GM12878 (cell line): ENCODE measurements at regions of chr19 and their contacts with region 1.

Region 1: DNA sequence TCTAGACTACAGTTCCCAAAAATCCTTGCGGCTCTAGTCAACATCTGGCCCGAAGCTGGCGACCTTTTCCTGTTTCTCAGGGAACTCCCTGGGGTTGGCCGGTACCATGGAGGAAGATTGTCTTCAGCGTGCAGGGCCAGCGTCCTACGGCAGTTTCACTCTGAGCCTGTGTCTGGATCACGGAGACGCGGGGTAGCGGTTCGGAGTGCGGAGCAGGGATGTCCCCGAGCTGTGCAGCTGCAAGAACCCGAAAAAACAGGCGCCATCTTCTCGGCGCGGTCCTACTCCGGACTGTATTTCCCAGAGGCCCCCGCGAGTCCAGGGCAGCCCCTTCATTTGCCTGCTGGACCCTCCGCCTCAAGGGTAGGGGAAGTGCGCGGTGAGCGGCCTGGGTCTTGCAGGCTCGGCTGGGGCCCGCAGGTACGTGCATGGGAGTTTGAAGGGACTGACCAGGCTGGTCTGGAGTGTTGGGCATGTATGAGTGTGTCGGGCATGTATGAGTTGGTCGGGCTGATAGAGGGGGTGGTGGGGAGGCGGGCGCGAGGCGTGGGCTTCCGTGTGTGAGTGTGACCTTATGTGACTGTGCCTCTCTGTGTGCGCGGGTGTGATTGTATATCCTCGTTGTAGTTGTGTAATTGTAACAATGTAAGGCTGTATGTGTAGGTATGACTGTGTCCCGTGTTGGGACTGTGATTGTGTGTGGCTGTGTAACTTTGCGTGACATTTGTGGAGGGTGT is at the start of gene ZNF383:
- DNase-seq: peak; percentile 81
- ATAC-seq: peak; percentile 96
- H3K4me3 ChIP-seq: peak within 1 kb of the TSS; percentile 86
- H3K27ac ChIP-seq: peak within 1 kb of the TSS; percentile 93
- H3K4me1 ChIP-seq: no peaks in the 10 kb centered on the region; the same call in 1 of the 2 replicates
- H3K27me3 ChIP-seq: no peaks in the 10 kb centered on the region
- CTCF ChIP-seq: no peak
- EP300 ChIP-seq: peak in 1 of 2 experiments; percentile 37; a peak in 1 of 4 replicates
- POLR2A ChIP-seq: peak; percentile 91
- RAD21 ChIP-seq: no peak
- polyA plus RNA-seq, gene ZNF383: 3.3 to 4.9 TPM

Region 2: DNA sequence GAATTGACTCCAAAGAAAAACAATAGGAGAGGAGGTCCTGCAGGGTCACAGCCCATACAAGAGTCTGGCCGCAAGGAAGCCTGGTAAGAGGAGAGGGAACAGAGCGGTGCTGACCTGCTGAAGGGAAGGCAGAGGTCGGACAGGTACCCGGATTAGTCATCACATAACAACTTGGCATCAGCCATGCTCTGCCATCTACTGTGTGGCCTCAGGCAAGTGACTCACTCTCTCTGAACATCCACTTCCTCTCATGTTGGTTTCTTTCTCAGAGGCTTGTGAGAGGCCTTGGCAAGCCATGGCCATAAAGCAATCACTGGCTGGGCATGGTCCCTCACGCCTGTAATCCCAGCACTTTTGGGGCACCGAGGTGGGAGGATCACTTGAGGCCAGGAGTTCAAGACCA is 1085.5 kb before region 1 on chr19:
- CTCF ChIA-PET with region 1: interaction called, 3 read pairs
- POLR2A ChIA-PET with region 1: interaction called, 4 read pairs
- RAD21 ChIA-PET with region 1: no interaction called
- SMC1A ChIA-PET with region 1: no interaction called
- in situ Hi-C with region 1: no loop called
- intact Hi-C with region 1: loop called (anchors 10 kb)
- DNase-seq: peak; percentile 43
- ATAC-seq: peak; percentile 37
- H3K4me3 ChIP-seq: no peak overlapping the region
- H3K27ac ChIP-seq: no peak overlapping the region
- H3K4me1 ChIP-seq: peaks cover 5% of the 10 kb centered on the region
- H3K27me3 ChIP-seq: no peaks in the 10 kb centered on the region
- CTCF ChIP-seq: no peak
- EP300 ChIP-seq: no peak
- POLR2A ChIP-seq: no peak
- RAD21 ChIP-seq: no peak

Region 3: DNA sequence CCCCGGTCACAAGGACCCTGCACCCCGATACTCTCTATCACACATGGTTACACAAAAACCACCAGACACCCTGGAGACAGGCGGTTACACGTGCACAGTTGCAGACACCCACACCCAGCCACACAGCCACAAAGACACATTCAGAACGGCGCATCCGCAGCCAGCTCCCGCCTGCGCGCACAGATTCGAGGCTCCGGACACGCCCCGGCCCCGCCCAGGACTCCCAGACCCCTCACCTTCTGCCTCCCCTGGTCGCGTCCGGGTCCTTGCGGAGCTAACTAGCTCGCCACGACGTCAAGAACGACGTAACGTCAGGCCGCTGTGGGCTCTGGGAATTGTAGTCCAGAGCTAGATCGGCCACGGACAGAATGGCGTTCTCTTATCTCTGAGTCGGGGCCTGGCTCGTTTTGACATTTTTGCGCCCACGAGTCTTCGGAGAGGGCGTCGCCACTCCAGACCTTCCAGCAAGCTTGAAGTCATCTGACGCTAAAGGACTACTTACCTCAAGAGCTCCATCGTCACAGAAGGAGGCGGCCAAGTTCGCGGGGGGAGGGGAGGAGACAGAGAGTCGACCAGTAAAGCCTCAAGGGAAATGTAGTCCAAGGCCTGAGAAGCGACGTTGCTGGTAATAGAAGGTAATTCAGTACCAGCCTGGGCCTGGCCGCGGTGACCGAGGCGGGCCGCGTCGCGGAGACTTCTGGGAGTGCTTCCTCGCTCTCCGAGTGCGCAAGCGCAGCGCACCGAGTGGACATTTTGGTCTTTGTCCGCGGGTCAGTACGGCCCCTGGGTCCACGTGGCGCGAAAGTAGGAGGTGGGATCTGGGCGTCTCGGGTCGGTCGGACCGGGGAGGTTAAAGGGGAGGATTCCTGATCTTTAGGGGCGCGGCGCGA is 1003.4 kb before region 1 on chr19 and contains the starts of genes ZNF146 and ZNF565:
- CTCF ChIA-PET with region 1: no interaction called
- POLR2A ChIA-PET with region 1: interaction called, 5 read pairs
- RAD21 ChIA-PET with region 1: interaction called, 3 read pairs
- SMC1A ChIA-PET with region 1: no interaction called
- in situ Hi-C with region 1: no loop called
- intact Hi-C with region 1: loop called (anchors 10 kb)
- DNase-seq: peak; percentile 96
- ATAC-seq: peak; percentile 94
- H3K4me3 ChIP-seq: peak within 1 kb of the TSS; percentile 78
- H3K27ac ChIP-seq: peak within 1 kb of the TSS; percentile 90
- H3K4me1 ChIP-seq: no peaks in the 10 kb centered on the region; the same call in 1 of the 2 replicates
- H3K27me3 ChIP-seq: no peaks in the 10 kb centered on the region
- CTCF ChIP-seq: no peak
- EP300 ChIP-seq: peak in 1 of 2 experiments; percentile 9; a peak in 2 of 4 replicates
- POLR2A ChIP-seq: peak; percentile 95
- RAD21 ChIP-seq: no peak
- polyA plus RNA-seq, gene ZNF146: 20.0 to 37.8 TPM
- polyA plus RNA-seq, gene ZNF565: 0.72 to 1.8 TPM

Region 4: DNA sequence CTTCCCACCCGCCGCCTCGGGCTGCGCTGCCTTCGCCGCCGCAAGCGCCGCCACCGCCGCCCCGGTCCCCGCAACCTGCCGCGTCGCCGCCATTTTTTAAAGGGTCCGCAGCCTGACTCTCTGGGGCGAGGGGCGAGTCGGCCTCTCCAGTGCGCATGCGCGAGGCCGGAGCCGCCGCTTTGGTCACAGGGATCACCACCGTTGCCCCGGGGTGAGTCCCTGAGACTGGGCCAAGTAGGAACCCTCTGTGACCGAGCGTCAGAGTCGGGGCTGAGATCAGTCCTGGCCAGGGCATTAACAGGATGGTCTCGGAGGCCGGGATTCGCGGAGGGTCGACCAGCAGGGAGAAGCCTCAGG is 960.5 kb before region 1 on chr19:
- CTCF ChIA-PET with region 1: no interaction called
- POLR2A ChIA-PET with region 1: no interaction called
- RAD21 ChIA-PET with region 1: no interaction called
- SMC1A ChIA-PET with region 1: no interaction called
- in situ Hi-C with region 1: no loop called
- intact Hi-C with region 1: no loop called
- DNase-seq: no peak
- ATAC-seq: no peak
- H3K4me3 ChIP-seq: no peak overlapping the region
- H3K27ac ChIP-seq: no peak overlapping the region
- H3K4me1 ChIP-seq: no peaks in the 10 kb centered on the region
- H3K27me3 ChIP-seq: no peaks in the 10 kb centered on the region
- CTCF ChIP-seq: no peak
- EP300 ChIP-seq: no peak
- POLR2A ChIP-seq: no peak
- RAD21 ChIP-seq: no peak

Region 5: DNA sequence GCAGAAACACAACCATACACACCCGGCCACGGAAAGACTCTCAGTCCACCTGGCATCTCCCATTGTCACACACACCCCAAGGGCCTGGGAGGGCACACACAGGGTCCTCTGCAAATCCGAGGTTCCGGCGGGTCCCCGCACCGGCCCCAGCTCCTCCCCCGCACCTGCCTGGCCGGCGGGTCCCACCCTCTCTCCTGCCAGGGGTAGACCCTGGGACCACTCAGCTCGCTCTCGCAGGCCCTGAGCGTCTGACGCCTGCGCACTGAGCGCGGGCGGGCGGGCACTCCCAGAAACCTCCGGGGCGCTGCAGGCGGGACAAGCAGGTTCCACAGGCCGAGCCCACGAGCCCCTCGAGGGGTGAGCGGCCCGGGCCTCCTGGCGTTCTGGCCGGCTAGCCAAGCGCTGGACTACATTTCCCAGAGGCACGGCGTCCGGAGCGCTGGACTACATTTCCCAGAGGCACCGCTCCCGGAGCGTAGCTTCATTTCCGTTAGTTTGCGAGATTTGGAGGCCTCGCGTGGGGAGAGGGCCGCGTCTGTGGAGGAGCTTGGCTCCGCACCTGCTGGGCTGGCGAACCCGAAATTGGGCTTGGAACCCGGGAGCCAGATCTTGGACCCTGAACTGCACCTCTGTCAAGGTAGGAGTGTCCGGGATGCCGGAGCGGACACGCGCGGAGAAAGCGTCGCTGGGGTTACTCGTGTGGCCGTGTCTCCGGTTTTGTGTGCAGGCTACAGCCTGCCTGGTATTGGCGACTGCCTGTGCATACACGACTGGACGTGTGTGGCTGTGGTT is 139.9 kb before region 1 on chr19 and contains the start of gene ZNF420:
- CTCF ChIA-PET with region 1: no interaction called
- POLR2A ChIA-PET with region 1: no interaction called
- RAD21 ChIA-PET with region 1: no interaction called
- SMC1A ChIA-PET with region 1: no interaction called
- in situ Hi-C with region 1: no loop called
- intact Hi-C with region 1: loop called (anchors 5 kb)
- DNase-seq: peak; percentile 82
- ATAC-seq: peak; percentile 99
- H3K4me3 ChIP-seq: peak within 1 kb of the TSS; percentile 88
- H3K27ac ChIP-seq: peak within 1 kb of the TSS; percentile 83
- H3K4me1 ChIP-seq: peaks cover 6% of the 10 kb centered on the region
- H3K27me3 ChIP-seq: no peaks in the 10 kb centered on the region
- CTCF ChIP-seq: no peak
- EP300 ChIP-seq: no peak
- POLR2A ChIP-seq: peak; percentile 89
- RAD21 ChIP-seq: no peak
- polyA plus RNA-seq, gene ZNF420: 6.4 to 7.8 TPM

Region 6: GRCh38 chr19:37172368-37173366 is 45.4 kb before region 1 on chr19 and contains the start of gene ZNF585A:
- CTCF ChIA-PET with region 1: no interaction called
- POLR2A ChIA-PET with region 1: no interaction called
- RAD21 ChIA-PET with region 1: no interaction called
- SMC1A ChIA-PET with region 1: no interaction called
- in situ Hi-C with region 1: no loop called
- intact Hi-C with region 1: loop called (anchors 5 kb)
- DNase-seq: peak; percentile 92
- ATAC-seq: peak; percentile 100
- H3K4me3 ChIP-seq: peak within 1 kb of the TSS; percentile 89
- H3K27ac ChIP-seq: peak within 1 kb of the TSS; percentile 82
- H3K4me1 ChIP-seq: no peaks in the 10 kb centered on the region
- H3K27me3 ChIP-seq: no peaks in the 10 kb centered on the region
- CTCF ChIP-seq: peak in 2 of 3 experiments; percentile 14 to 16; a peak in 2 of 6 replicates
- EP300 ChIP-seq: no peak
- POLR2A ChIP-seq: peak; percentile 62
- RAD21 ChIP-seq: no peak
- polyA plus RNA-seq, gene ZNF585A: 36.4 to 38.7 TPM

Region 7: GRCh38 chr19:37334179-37335071 is 116.4 kb after region 1 on chr19:
- CTCF ChIA-PET with region 1: no interaction called
- POLR2A ChIA-PET with region 1: no interaction called
- RAD21 ChIA-PET with region 1: no interaction called
- SMC1A ChIA-PET with region 1: no interaction called
- in situ Hi-C with region 1: no loop called
- intact Hi-C with region 1: loop called (anchors 10 kb)
- DNase-seq: peak; percentile 71
- ATAC-seq: peak; percentile 100
- H3K4me3 ChIP-seq: peak overlapping the region; percentile 76
- H3K27ac ChIP-seq: peak overlapping the region; percentile 81
- H3K4me1 ChIP-seq: peaks cover 7% of the 10 kb centered on the region
- H3K27me3 ChIP-seq: no peaks in the 10 kb centered on the region
- CTCF ChIP-seq: 0 out of 6 replicates have a peak, but pooled peaks of 1 of the 3 experiments have one; percentile 3
- EP300 ChIP-seq: no peak; a peak in 1 of 4 replicates
- POLR2A ChIP-seq: peak; percentile 81
- RAD21 ChIP-seq: no peak

Region 8: DNA sequence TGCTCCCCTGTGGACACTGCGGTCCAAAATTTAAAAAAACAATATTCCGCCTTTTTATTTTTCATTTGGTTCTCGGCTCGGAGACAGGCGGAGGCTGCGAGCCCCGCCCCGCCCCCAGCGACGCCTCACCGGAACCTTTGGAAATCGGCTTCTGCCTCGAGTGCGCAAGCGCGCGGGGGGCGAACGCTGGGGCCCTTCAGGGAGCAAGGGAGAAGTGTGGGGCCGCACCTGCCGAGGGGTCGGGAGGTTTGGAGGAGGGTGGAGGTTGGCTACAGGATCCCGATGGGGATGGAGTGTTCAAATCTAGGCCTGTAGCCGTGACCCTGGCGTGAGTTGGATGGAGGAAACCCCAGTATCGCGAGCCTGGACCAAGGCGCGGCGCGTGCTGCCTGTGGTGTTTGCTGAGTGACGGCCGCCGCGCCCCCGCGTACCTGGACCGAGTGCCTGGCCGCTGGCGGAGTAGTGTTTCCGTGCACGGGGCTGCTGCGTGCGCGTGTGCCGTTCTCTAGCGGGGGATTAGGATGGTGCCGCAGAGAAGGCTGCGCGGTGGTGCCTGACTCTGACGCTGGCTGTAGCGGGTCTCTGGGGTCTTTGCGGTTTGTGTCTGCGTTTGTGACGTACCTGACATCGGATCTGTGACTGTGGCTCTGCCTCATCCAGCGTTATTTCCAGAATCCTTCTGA is 437.8 kb after region 1 on chr19:
- CTCF ChIA-PET with region 1: no interaction called
- POLR2A ChIA-PET with region 1: no interaction called
- RAD21 ChIA-PET with region 1: no interaction called
- SMC1A ChIA-PET with region 1: no interaction called
- in situ Hi-C with region 1: no loop called
- intact Hi-C with region 1: loop called (anchors 1 kb)
- DNase-seq: peak; percentile 45
- ATAC-seq: peak; percentile 79
- H3K4me3 ChIP-seq: peak overlapping the region; percentile 80
- H3K27ac ChIP-seq: peak overlapping the region; percentile 85
- H3K4me1 ChIP-seq: no peaks in the 10 kb centered on the region
- H3K27me3 ChIP-seq: no peaks in the 10 kb centered on the region
- CTCF ChIP-seq: no peak
- EP300 ChIP-seq: 0 out of 4 replicates have a peak, but pooled peaks of 1 of the 2 experiments have one; percentile 25
- POLR2A ChIP-seq: peak; percentile 79
- RAD21 ChIP-seq: no peak